ENCODE measurements at regions of chr19 and their contacts with region 1.

Region 1: DNA sequence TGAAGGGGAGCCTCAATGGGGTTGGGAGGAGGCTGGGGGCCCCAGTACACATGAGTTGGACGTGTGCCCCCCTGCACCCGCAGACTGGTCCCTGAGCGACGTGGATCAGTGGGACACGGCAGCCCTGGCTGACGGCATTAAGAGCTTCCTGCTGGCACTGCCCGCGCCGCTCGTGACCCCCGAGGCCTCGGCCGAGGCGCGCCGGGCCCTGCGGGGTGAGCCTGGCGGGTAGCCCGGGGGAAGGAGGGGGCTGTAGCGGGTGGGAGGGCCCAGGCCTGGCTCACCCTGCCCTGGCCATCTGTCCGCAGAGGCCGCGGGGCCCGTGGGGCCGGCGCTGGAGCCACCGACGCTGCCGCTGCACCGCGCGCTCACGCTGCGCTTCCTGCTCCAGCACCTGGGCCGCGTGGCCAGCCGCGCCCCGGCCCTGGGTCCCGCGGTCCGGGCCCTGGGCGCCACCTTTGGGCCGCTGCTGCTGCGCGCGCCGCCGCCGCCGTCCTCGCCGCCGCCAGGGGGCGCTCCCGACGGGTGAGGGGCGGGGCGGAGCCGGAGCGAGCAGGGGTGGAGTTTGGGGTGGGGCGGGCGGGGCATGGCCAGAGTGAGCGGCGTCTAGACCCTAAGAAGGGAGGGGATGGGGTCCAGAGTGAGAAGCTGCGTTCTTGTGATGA is 8.1 kb downstream of the PIK3R2 start:
- DNase-seq: peak; percentile 97
- H3K4me3 ChIP-seq: peak overlapping the region in 1 of 2 experiments; percentile 10; a peak in 1 of 4 replicates
- H3K27ac ChIP-seq: peak overlapping the region in 1 of 2 experiments; percentile 71; a peak in 2 of 4 replicates
- H3K4me1 ChIP-seq: peaks cover 17 to 38% of the 10 kb centered on the region in 2 experiments; a peak in 2 of 4 replicates
- H3K27me3 ChIP-seq: no peaks in the 10 kb centered on the region
- CTCF ChIP-seq: no peak
- EP300 ChIP-seq: no peak
- RAD21 ChIP-seq: peak; percentile 24; the same call in 1 of the 2 replicates

Region 2: DNA sequence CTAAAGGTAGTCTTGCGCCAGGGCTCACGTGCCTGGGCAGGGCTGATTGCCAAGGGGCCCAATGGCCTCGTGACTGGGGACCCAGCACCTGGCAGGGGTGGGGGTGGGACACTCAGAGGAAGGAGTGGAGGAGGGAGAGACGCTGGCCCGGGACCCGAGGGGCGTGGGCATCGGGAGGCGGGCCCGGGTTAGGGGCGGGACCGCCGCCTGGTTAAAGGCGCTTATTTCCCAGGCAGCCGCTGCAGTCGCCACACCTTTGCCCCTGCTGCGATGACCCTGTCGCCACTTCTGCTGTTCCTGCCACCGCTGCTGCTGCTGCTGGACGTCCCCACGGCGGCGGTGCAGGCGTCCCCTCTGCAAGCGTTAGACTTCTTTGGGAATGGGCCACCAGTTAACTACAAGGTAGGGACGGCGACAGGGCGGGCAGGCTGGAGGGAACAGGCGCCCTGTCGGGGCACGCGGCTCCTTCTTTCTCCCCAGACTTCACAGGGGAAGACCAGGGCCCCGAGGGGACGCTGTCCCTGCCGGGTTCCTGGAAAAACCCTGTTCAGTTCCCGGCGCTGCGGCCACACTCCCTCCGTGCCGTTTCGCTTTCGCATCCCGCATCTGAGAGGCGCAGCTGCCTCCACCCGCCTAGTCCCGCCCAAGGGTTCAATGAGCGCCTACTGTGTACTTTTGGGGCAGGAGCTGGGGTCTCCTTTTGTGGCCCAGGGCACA is 12.6 kb after region 1 on chr19 and contains the start of gene IFI30:
- CTCF ChIA-PET with region 1: interaction called, 19 read pairs
- POLR2A ChIA-PET with region 1: interaction called, 5 read pairs
- DNase-seq: peak; percentile 88
- H3K4me3 ChIP-seq: peak within 1 kb of the TSS; percentile 63 to 78
- H3K27ac ChIP-seq: no peak within 1 kb of the TSS; a peak in 1 of 4 replicates
- H3K4me1 ChIP-seq: peaks cover 0 to 8% of the 10 kb centered on the region in 2 experiments; a peak in 1 of 4 replicates
- H3K27me3 ChIP-seq: no peaks in the 10 kb centered on the region
- CTCF ChIP-seq: no peak
- EP300 ChIP-seq: no peak
- RAD21 ChIP-seq: no peak
- polyA plus RNA-seq, gene IFI30: 10.7 and 11.6 TPM in 2 replicates

Region 3: DNA sequence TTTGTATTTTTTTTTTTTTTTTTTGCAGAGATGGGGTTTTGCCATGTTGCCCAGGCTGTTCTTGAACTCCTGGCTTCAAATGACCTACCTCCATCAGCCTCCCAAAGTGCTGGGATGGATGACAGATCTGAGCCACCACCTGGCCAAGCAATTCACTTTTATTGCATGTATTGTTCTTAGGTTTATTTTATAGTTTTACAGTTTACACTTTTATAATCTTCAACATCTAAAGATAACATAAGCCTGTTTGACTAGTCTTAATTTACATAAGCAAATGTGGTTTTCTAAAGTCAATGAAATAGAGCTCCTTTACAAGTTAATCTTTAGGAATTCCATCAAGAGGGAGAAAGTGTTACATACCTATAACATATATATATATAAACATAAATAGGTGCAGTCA is 22.4 kb after region 1 on chr19:
- CTCF ChIA-PET with region 1: interaction called, 18 read pairs
- POLR2A ChIA-PET with region 1: no interaction called
- DNase-seq: no peak
- H3K4me3 ChIP-seq: no peak overlapping the region
- H3K27ac ChIP-seq: no peak overlapping the region
- H3K4me1 ChIP-seq: no peaks in the 10 kb centered on the region
- H3K27me3 ChIP-seq: no peaks in the 10 kb centered on the region
- CTCF ChIP-seq: no peak
- EP300 ChIP-seq: no peak
- RAD21 ChIP-seq: no peak

Region 4: DNA sequence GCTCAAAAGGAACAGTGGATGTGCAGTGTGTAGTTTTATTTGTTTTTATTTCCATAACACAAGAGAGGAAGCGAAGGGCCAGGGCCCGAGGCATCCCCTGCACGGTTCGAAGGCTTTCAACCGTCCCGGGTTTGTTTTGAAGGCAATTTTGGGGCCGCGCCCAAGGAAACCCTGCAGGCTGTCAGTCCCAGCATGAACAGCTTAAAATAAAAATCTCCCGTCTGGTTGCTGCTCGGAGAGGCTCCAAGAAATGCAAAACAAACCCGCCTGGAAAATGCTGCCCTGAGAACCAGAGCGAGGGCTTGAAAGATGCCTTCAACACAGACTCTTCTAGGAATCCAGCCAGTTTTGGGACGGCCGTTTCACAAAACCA is 145.8 kb after region 1 on chr19:
- CTCF ChIA-PET with region 1: no interaction called
- POLR2A ChIA-PET with region 1: no interaction called
- DNase-seq: no peak
- H3K4me3 ChIP-seq: no peak overlapping the region
- H3K27ac ChIP-seq: 0 out of 4 replicates have a peak overlapping the region, but pooled peaks of 1 of the 2 experiments have one; percentile 12
- H3K4me1 ChIP-seq: peaks cover 18 to 23% of the 10 kb centered on the region in 2 experiments; a peak in 3 of 4 replicates
- H3K27me3 ChIP-seq: no peaks in the 10 kb centered on the region
- CTCF ChIP-seq: no peak
- EP300 ChIP-seq: no peak
- RAD21 ChIP-seq: no peak

Measured in SK-N-SH (cell line).